ENCODE measurements at regions of chr7 and their contacts with region 1.

Region 1: DNA sequence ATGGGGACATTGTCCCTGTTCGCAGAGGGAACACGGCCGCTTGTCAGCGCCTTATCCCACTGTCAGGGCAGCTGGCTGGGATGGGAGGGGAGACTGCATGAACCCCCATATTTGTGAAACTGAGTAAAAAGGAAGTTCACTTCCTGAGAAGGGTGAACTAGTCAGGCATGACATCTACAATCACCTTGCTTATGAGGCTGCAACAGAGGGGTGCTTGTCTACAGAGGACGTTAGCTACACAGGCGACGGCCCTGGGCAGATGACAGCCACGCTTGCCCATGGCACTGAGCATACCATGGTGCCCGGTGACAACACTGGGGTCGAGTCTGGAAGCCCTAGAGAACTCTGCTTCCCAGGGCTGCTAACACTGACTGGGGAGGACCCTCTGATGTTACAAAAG is 46.0 kb upstream of the KDM7A start:
- DNase-seq: no peak
- H3K4me3 Mint-ChIP-seq: no peak overlapping the region
- H3K27ac Mint-ChIP-seq: peak overlapping the region; percentile 87
- H3K4me1 Mint-ChIP-seq: peaks cover 46% of the 10 kb centered on the region
- H3K27me3 Mint-ChIP-seq: no peaks in the 10 kb centered on the region

Region 2: DNA sequence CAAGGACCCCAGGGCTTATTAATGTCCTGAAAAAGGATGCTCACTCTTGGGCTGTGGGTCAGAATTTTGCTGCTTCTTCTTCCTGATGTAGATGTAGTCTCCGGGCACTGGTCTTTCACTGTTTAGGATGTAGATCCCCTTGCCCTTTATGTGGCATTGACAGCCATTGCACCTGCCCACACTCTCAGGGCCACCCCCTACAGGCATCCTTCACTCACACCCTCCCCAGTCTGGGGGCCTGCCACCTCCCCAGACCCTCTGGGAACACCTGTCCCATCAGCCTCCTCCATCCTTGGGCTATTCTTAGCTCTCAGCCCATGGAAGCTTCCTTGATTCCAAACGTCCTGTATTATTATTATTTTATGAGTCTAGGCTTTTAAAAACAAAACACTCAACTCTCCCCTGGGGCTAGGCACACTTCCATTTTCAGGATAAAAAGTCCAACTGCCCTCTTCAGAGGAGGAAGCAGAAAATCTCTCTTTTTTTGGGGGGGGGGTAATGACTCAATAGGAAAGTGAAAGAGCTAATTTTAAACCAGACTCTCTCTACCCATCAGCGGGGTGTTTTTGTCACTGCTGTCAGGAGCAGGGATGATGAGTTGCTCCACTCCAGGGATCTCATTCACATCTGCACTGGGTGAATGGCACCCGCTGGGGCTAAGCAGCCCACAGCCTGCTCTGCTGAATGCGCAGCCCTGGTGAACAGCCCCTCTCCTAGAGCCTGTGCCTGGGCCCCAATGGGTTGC is 727.8 kb before region 1 on chr7:
- CTCF ChIA-PET with region 1: no interaction called
- POLR2A ChIA-PET with region 1: no interaction called
- DNase-seq: peak; percentile 31
- H3K4me3 Mint-ChIP-seq: no peak overlapping the region
- H3K27ac Mint-ChIP-seq: no peak overlapping the region
- H3K4me1 Mint-ChIP-seq: peaks cover 26% of the 10 kb centered on the region
- H3K27me3 Mint-ChIP-seq: peaks cover 13% of the 10 kb centered on the region

Region 3: GRCh38 chr7:140209866-140210609 is 12.8 kb before region 1 on chr7:
- CTCF ChIA-PET with region 1: interaction called, 12 read pairs
- POLR2A ChIA-PET with region 1: interaction called, 318 read pairs
- DNase-seq: peak; percentile 80
- H3K4me3 Mint-ChIP-seq: peak overlapping the region; percentile 58
- H3K27ac Mint-ChIP-seq: peak overlapping the region; percentile 94
- H3K4me1 Mint-ChIP-seq: peaks cover 90% of the 10 kb centered on the region
- H3K27me3 Mint-ChIP-seq: no peaks in the 10 kb centered on the region

Measured in activated CD4-positive, alpha-beta memory T cell treated with anti-CD3 and anti-CD28 coated beads, Interleukin-2, amount 10 ng/mL, durations not matched to agents 7 days and 5 days (primary cell).